Activated CD4-positive, alpha-beta T cell treated with anti-CD3 and anti-CD28 coated beads, Interleukin-2, amount 10 ng/mL, durations not matched to agents 7 days and 5 days (primary cell): ENCODE measurements at regions of chr1 and their contacts with region 1.

Region 1: GRCh38 chr1:16625497-16626408 is 12.4 kb upstream of the NBPF1 start:
- DNase-seq: no peak
- H3K4me3 Mint-ChIP-seq: no peak overlapping the region
- H3K27ac Mint-ChIP-seq: no peak overlapping the region
- H3K4me1 Mint-ChIP-seq: peaks cover 4% of the 10 kb centered on the region
- H3K27me3 Mint-ChIP-seq: no peaks in the 10 kb centered on the region

Region 2: DNA sequence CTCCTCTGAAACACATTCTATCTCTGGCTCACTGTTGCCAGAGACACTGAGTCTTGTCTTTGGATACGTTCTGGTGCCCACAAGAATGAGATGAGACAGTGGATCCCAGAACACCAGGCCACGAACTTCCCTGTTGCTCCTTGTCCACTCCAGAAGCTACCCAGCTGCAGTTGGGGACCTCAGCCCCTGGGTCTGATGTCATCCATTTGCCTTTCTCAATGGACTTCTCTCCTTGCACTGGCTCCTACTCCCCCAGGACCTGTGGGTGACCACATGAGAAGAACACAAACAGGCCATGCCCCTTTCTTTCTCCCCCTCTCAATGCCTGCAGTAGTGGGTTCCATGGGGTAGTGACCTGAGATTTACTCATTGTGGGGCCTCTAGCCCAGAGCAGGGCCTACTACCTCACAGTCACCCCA is 18.3 kb before region 1 on chr1:
- CTCF ChIA-PET with region 1: interaction called, 33 read pairs
- POLR2A ChIA-PET with region 1: interaction called, 3 read pairs
- DNase-seq: no peak
- H3K4me3 Mint-ChIP-seq: no peak overlapping the region
- H3K27ac Mint-ChIP-seq: no peak overlapping the region
- H3K4me1 Mint-ChIP-seq: no peaks in the 10 kb centered on the region
- H3K27me3 Mint-ChIP-seq: no peaks in the 10 kb centered on the region

Region 3: DNA sequence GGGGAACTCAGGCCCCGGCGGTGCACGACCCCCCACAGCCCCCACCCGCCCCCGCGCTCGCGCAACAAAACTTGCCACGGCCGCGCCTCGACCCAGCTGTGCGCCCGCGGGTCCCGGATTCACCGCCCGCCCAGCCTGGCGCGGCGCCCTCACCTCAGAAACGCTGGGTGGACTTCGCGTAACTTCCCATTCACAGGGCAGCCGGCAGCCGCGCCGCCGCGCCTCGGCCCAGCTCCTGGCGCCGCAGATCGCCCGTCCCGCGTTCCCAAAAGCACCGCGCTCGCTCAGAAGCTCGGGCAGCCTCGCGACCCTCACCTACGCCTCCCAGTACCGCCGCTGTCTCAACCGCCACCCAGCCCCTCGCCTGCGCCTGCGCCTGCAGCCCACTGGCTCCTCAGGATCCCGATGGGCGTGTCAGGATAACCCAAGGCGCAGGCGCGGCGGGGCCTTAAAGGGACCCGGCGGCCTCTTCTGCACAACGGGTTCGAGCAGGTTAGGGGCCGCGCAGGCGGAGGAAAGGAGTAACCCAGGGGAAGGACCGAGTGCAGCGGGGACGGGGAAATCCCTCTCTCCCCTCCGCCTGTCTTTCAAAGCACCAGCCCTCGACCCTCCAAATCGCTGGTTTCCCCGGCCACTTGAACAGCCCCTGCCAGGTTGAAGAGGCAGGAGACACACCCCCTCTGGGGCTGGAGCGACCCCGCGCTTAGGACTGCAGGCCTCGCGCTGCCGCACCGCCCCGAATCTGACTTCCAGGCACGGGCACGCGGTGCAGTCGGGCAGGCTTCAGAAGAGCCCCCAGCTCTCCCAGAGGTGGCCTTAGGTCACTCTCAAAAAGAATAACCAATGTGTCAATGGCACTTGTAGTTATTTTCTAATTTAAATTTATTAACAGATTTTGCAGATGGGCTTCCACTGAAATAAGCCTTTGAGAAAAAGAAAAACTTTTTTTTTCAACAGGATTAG is 12.3 kb before region 1 on chr1 and contains the start of gene NBPF1:
- CTCF ChIA-PET with region 1: interaction called, 33 read pairs
- POLR2A ChIA-PET with region 1: interaction called, 3 read pairs
- DNase-seq: peak; percentile 89
- H3K4me3 Mint-ChIP-seq: no peak within 1 kb of the TSS
- H3K27ac Mint-ChIP-seq: no peak within 1 kb of the TSS
- H3K4me1 Mint-ChIP-seq: no peaks in the 10 kb centered on the region
- H3K27me3 Mint-ChIP-seq: no peaks in the 10 kb centered on the region
- total RNA-seq, gene NBPF1: 6.7 to 7.7 TPM